ENCODE measurements at regions of chr9 and their contacts with region 1.

Region 1: GRCh38 chr9:70260606-70261005 is 1.8 kb downstream of the SMC5 start:
- DNase-seq: no peak
- ATAC-seq: no peak

Region 2: DNA sequence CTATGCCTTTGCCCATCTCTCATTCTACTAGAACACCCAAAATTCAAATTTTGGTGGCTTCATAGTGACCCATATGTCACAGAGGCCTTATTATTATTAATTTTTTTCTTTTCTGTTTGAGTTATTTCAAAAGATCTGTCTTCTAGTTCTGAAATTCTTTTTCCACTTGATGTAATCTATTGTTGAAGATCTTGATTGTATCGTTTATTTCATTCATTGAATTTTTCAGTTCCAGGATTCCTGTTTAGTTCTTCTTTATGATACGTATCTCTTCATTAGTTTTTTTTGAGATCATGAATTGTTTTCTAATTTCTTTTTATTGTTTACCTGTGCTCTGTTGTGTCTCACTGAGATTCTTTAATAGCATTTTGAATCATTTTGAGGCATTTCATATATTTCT is 563.8 kb before region 1 on chr9:
- intact Hi-C with region 1: no loop called
- DNase-seq: no peak
- ATAC-seq: no peak

Region 3: DNA sequence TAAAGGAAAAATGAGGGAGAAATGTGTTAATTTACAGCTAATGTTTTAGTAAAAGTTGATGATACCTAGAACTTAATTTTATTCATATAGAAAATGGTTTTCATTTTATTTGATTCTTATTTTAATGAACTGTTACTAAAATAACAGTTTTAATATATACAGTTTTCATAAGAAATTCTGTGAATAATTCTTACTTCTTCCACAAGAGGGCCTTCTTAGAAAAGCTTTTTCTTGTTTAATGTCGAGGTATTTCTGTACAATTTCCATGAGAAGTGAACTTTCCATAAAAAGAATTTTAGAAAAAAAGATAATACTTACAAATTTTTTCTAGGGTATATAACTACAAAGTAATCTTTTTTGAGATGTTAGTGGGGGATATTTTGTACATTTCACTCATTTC is 80.0 kb after region 1 on chr9:
- intact Hi-C with region 1: loop called in 1 of 2 experiments (anchors 10 kb)
- DNase-seq: no peak
- ATAC-seq: no peak